SK-N-SH (cell line): ENCODE measurements at regions of chr2 and their contacts with region 1.

Region 1: GRCh38 chr2:234406085-234406484 is 90.8 kb downstream of the ARL4C start:
- DNase-seq: no peak
- H3K4me3 ChIP-seq: no peak overlapping the region
- H3K27ac ChIP-seq: no peak overlapping the region
- H3K4me1 ChIP-seq: no peaks in the 10 kb centered on the region
- H3K27me3 ChIP-seq: no peaks in the 10 kb centered on the region
- CTCF ChIP-seq: no peak; the same call in 1 of the 2 replicates
- EP300 ChIP-seq: no peak
- RAD21 ChIP-seq: peak; percentile 73

Region 2: GRCh38 chr2:234395891-234396420 is 10.1 kb before region 1 on chr2:
- CTCF ChIA-PET with region 1: interaction called, 12 read pairs
- POLR2A ChIA-PET with region 1: no interaction called
- DNase-seq: peak; percentile 67
- H3K4me3 ChIP-seq: no peak overlapping the region
- H3K27ac ChIP-seq: peak overlapping the region in 1 of 2 experiments; percentile 64; a peak in 2 of 4 replicates
- H3K4me1 ChIP-seq: peaks cover 0 to 16% of the 10 kb centered on the region in 2 experiments; a peak in 1 of 4 replicates
- H3K27me3 ChIP-seq: no peaks in the 10 kb centered on the region
- CTCF ChIP-seq: no peak
- EP300 ChIP-seq: peak in 1 of 2 experiments; percentile 67; a peak in 1 of 4 replicates
- RAD21 ChIP-seq: peak; percentile 4; the same call in 1 of the 2 replicates